Activated CD4-positive, alpha-beta memory T cell treated with anti-CD3 and anti-CD28 coated beads for 36 hours (primary cell): ENCODE measurements at regions of chr4 and their contacts with region 1.

Region 1: DNA sequence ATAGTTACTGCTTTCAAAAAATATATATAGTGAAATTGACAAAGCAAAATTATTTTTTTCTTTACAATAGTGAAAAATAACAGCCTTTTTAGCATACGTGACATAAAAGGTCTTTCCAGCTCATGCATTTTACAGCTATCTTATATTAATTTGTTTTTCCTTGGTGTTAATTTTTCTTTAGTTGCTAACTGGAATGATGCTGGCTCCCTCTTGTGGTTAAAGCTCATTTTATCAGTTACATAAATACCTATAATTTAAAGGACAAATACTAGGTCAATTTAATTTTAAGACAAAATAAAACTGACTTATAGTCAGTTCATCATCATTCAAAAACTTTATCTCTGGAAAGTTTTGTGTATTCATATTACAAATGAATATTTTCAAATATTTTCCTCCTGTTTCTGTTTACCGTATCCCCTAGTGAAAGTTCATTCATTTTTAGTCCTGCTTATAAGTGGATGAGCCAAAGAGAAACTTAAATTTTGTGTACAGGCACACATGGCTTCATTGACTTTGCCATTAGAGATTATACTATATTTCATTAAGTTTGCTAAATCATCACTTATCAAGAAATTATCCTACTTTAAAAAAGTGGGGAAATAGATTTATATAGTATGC is 9.9 kb upstream of the ANAPC4 start:
- DNase-seq: no peak
- H3K4me3 Mint-ChIP-seq: no peak overlapping the region
- H3K27ac Mint-ChIP-seq: no peak overlapping the region
- H3K4me1 Mint-ChIP-seq: no peaks in the 10 kb centered on the region
- H3K27me3 Mint-ChIP-seq: no peaks in the 10 kb centered on the region

Region 2: GRCh38 chr4:23737571-23737970 is 1629.5 kb before region 1 on chr4:
- CTCF ChIA-PET with region 1: no interaction called
- POLR2A ChIA-PET with region 1: no interaction called
- intact Hi-C with region 1: no loop called
- DNase-seq: no peak
- H3K4me3 Mint-ChIP-seq: no peak overlapping the region
- H3K27ac Mint-ChIP-seq: no peak overlapping the region
- H3K4me1 Mint-ChIP-seq: no peaks in the 10 kb centered on the region
- H3K27me3 Mint-ChIP-seq: no peaks in the 10 kb centered on the region

Region 3: GRCh38 chr4:25144870-25145481 is 222.1 kb before region 1 on chr4:
- CTCF ChIA-PET with region 1: interaction called, 11 read pairs
- POLR2A ChIA-PET with region 1: no interaction called
- intact Hi-C with region 1: no loop called
- DNase-seq: no peak
- H3K4me3 Mint-ChIP-seq: no peak overlapping the region
- H3K27ac Mint-ChIP-seq: no peak overlapping the region
- H3K4me1 Mint-ChIP-seq: no peaks in the 10 kb centered on the region
- H3K27me3 Mint-ChIP-seq: no peaks in the 10 kb centered on the region

Region 4: GRCh38 chr4:25180524-25181131 is 186.5 kb before region 1 on chr4:
- CTCF ChIA-PET with region 1: interaction called, 40 read pairs
- POLR2A ChIA-PET with region 1: no interaction called
- intact Hi-C with region 1: loop called (anchors 1 kb)
- DNase-seq: peak; percentile 43
- H3K4me3 Mint-ChIP-seq: no peak overlapping the region
- H3K27ac Mint-ChIP-seq: no peak overlapping the region
- H3K4me1 Mint-ChIP-seq: peaks cover 26% of the 10 kb centered on the region
- H3K27me3 Mint-ChIP-seq: no peaks in the 10 kb centered on the region

Region 5: DNA sequence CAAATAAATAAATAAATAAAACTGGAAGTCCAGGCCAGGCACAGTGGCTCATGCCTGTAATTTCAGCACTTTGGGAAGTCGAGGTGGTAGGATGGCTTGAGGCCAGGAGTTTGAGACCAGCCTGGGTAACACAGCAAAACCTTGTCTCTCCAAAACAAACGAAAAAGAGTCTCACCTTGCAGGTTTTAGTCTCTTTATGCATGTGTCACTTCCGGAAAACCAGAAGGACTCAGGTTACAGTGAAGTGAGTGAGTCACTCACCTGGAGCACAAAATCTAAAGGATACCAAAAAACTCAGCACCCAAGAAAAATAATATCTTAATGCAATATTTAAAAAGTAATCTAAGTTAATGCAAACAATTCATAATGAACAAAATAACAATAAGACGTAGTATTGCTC is 268.4 kb after region 1 on chr4:
- CTCF ChIA-PET with region 1: no interaction called
- POLR2A ChIA-PET with region 1: no interaction called
- intact Hi-C with region 1: no loop called
- DNase-seq: no peak
- H3K4me3 Mint-ChIP-seq: no peak overlapping the region
- H3K27ac Mint-ChIP-seq: no peak overlapping the region
- H3K4me1 Mint-ChIP-seq: no peaks in the 10 kb centered on the region
- H3K27me3 Mint-ChIP-seq: no peaks in the 10 kb centered on the region